ENCODE measurements at regions of chr5 and their contacts with region 1.

Region 1: DNA sequence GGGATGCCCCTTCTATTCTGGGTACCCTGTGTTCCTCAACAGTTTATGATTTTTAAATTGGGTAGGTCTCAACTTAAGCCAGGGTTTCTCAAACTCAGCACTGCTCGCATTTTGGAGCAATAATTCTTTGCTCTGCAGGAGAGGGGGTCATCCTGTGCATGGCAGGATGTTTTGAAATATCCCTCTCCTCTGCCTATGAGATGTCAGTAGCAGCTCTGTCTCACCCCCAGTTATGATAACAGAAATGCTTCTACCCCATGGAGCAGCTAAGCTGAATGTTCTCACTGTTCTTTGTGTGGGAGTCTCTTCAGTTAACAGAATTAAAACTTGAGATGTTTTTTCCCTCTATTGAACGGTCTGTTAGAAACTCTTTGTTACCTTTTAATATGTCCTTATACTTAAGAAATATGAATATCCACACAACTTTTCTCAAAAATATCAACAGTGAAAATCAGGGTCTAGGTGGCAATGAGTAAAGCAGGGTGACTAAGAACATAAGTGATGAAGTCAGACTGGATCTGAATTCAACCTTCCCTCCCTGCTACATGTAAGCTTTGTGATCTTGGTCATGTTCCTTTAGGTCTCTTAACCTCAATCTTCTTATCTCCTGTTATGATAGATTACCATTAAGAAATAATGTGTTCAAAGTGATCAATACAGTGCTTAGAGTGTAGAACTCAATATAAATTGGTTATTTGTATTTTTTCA is 89.0 kb downstream of the CAMK4 start:
- DNase-seq: no peak
- CTCF ChIP-seq: no peak

Region 2: GRCh38 chr5:110951373-110951791 is 361.8 kb before region 1 on chr5:
- CTCF ChIA-PET with region 1: no interaction called
- POLR2A ChIA-PET with region 1: no interaction called
- DNase-seq: no peak
- CTCF ChIP-seq: no peak

Region 3: GRCh38 chr5:111254613-111255012 is 58.6 kb before region 1 on chr5:
- CTCF ChIA-PET with region 1: no interaction called
- POLR2A ChIA-PET with region 1: no interaction called
- DNase-seq: peak; percentile 64
- CTCF ChIP-seq: no peak

Region 4: DNA sequence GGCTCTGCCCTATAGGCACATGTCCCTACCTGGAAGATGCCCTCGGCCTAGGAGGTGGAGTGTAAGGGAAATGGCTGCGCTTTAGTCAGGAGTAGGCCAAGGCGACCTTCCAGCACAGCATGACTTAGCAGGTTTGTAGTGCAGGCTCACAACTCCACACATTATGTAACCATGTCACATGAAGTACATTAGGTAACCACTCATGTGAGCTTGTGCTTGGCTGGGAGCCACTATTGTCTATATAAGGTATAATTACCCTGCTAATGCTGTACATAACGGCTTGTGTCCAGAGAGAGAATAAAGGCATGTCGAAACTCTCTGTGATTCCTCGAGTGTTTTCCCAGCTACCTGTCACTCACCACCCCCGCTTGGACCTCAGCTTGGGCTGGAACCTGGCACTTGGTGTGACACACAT is 14.1 kb before region 1 on chr5:
- CTCF ChIA-PET with region 1: interaction called, 10 read pairs
- POLR2A ChIA-PET with region 1: no interaction called
- DNase-seq: no peak
- CTCF ChIP-seq: no peak

Measured in GM10248 (cell line).